HepG2 (cell line): ENCODE measurements at regions of chr20 and their contacts with region 1.

Region 1: GRCh38 chr20:40970201-40970600 is 58.4 kb upstream of the TOP1 start:
- DNase-seq: no peak
- ATAC-seq: no peak
- H3K4me3 ChIP-seq: no peak overlapping the region
- H3K27ac ChIP-seq: no peak overlapping the region
- H3K4me1 ChIP-seq: peaks cover 25% of the 10 kb centered on the region
- H3K27me3 ChIP-seq: peaks cover 4 to 8% of the 10 kb centered on the region in 2 experiments; a peak in 2 of 5 replicates
- CTCF ChIP-seq: 0 out of 2 replicates have a peak, but pooled peaks have one; percentile 21
- EP300 ChIP-seq: no peak
- POLR2A ChIP-seq: no peak
- RAD21 ChIP-seq: no peak

Region 2: DNA sequence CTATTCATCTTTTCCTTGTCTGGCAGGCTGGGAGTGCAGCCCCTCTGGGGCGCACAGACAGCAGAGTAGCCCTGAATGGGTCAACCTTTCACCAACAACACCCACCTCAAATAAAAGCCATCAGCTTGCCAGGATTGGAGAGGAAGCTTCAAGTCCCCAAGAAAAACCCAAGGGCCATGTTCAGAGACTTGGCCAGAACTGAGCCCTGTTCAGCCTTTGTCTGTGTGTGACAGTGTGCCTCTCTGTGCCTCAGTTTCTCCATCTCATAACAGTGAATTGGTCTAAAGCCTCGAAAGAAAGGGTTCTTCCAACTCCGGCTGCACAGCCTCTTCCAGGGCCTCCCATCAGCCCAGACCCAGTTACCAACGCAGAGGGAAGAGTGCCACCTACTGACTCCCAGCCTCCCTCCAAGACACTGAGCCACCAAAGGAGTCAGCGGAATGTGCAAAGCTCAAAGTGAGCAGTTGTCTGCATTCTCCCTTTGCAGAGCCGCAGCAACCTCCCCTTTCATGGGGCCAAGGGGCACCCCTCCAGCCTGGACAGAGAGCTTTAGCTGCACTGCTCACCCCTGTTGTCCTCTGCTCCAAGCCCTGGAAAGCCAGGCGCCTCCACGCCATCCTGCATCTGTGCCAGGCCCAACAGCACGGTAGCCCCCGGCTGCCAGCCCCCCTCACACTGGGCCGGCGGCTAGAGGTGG is 24.3 kb before region 1 on chr20:
- CTCF ChIA-PET with region 1: no interaction called
- POLR2A ChIA-PET with region 1: no interaction called
- in situ Hi-C with region 1: no loop called
- intact Hi-C with region 1: no loop called
- DNase-seq: peak; percentile 72
- ATAC-seq: peak; percentile 99
- H3K4me3 ChIP-seq: no peak overlapping the region
- H3K27ac ChIP-seq: no peak overlapping the region
- H3K4me1 ChIP-seq: peaks cover 11% of the 10 kb centered on the region
- H3K27me3 ChIP-seq: peaks cover 0 to 13% of the 10 kb centered on the region in 2 experiments; a peak in 2 of 5 replicates
- CTCF ChIP-seq: peak; percentile 98
- EP300 ChIP-seq: 0 out of 4 replicates have a peak, but pooled peaks of 1 of the 2 experiments have one; percentile 24
- POLR2A ChIP-seq: no peak
- RAD21 ChIP-seq: peak; percentile 93

Region 3: DNA sequence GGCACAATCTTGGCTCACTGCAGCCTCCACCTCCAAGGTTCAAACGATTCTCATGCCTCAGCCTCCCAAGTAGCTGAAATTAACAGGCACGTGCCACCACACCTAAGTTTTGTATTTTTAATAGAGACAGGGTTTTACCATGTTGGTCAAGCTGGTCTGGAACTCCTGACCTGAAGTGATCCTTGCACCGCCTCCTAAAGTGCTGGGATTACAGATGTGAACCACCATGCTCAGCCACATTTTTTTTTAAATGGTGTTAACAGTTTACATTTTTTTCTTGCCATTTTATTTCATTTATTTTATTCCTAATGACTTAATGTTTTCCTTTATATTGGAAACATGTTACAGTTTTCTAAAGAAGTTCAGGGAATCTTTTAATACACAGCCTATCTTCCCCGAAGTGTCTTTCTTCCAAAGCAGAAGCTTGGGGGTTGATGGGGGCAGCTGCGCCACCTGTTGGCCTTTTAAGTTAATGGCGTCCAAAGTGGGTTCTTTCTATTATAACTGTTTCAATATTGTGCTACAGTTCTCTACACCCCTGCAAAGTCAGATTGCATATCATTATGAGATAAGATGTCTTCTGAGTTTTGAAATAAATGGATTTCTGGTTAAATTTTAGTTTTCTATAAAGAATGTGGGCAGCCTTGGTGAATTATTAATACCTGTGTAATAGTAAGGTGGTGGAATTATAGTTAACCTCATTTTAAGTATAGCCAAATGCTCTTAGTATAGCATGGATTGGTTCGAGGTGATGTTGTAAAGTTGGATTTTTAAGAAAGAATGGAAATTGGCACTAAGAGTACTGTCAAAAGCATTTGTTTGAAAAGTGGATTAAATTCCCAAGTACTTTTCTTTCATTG is 125.1 kb after region 1 on chr20:
- CTCF ChIA-PET with region 1: interaction called, 76 read pairs
- POLR2A ChIA-PET with region 1: no interaction called
- in situ Hi-C with region 1: loop called (anchors 5 kb)
- intact Hi-C with region 1: loop called (anchors 1 kb)
- DNase-seq: peak; percentile 60
- ATAC-seq: peak; percentile 82
- H3K4me3 ChIP-seq: no peak overlapping the region
- H3K27ac ChIP-seq: no peak overlapping the region
- H3K4me1 ChIP-seq: no peaks in the 10 kb centered on the region
- H3K27me3 ChIP-seq: no peaks in the 10 kb centered on the region
- CTCF ChIP-seq: peak; percentile 87
- EP300 ChIP-seq: no peak
- POLR2A ChIP-seq: no peak
- RAD21 ChIP-seq: peak; percentile 81